Endothelial cell of umbilical vein (primary cell): ENCODE measurements at regions of chr6 and their contacts with region 1.

Region 1: DNA sequence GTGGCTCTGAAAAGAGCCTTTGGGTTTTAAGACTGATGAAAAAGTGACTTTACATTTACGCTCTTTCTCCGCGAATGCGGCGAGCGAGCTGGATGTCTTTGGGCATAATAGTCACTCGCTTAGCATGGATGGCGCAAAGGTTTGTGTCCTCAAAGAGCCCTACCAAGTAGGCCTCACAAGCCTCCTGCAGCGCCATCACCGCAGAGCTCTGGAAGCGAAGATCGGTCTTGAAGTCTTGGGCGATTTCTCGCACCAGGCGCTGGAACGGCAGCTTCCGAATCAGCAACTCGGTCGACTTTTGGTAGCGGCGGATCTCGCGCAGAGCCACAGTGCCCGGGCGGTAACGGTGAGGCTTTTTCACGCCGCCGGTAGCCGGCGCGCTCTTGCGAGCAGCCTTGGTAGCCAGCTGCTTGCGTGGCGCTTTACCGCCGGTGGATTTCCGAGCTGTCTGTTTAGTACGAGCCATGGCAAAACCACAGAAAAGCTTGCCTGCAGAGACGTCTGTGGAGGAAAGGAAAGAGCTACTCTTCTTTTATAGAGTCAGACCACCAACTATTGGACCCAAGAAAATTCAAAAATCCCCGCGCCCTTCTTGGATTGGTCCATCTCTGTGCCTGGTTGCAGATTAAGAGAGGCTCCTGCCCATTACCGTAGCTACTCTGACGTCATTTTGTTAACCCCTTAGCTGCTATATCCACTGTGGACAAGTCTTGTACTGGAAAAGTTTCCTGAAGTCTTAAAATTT is 55.5 kb upstream of the HFE start:
- DNase-seq: peak; percentile 96
- H3K4me3 ChIP-seq: peak overlapping the region; percentile 45 to 78 (median 47)
- H3K27ac ChIP-seq: peak overlapping the region; percentile 88
- H3K4me1 ChIP-seq: peaks cover 33% of the 10 kb centered on the region
- H3K27me3 ChIP-seq: no peaks in the 10 kb centered on the region
- CTCF ChIP-seq: peak in 1 of 2 donors; percentile 29
- POLR2A ChIP-seq: peak; percentile 99

Region 2: DNA sequence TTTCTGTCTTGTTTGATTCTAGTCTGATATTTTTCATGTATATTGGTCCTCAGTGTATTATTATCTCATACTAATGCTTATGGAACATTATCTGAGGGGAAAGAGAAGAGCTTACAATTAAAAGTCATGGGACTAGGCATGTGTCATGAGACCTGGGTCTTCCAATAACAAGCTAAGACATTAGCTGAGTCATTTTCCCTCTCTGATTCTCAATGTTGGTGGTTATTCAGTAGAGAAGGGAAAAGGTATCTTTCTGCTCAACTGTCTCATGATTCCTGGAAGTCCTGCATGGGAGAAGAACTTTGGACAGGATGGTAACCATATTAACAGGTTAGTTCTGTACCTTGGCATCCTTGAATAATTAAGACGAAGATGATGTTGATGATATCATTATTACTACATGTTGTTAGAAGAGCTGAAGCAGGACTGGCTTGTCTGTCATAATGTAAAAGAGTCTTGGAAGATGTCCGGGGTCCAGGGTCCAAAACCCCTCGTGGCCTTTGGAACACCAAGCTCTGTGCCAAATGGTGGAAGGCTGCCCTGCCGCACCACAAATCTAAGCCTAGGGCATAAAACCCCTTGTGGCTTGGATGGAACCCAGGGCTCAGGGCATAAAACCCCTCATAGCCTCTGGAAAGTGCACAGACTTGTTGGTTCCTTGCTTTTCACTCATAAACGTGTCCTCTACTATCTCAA is 50.1 kb before region 1 on chr6:
- CTCF ChIA-PET with region 1: no interaction called
- POLR2A ChIA-PET with region 1: no interaction called
- dilution Hi-C with region 1: no loop called
- intact Hi-C with region 1: no loop called
- DNase-seq: no peak
- H3K4me3 ChIP-seq: no peak overlapping the region
- H3K27ac ChIP-seq: no peak overlapping the region
- H3K4me1 ChIP-seq: no peaks in the 10 kb centered on the region
- H3K27me3 ChIP-seq: no peaks in the 10 kb centered on the region
- CTCF ChIP-seq: no peak
- POLR2A ChIP-seq: no peak

Region 3: GRCh38 chr6:26045065-26045927 is 13.5 kb after region 1 on chr6:
- CTCF ChIA-PET with region 1: interaction called, 53 read pairs
- POLR2A ChIA-PET with region 1: interaction called, 75 read pairs
- dilution Hi-C with region 1: no loop called
- intact Hi-C with region 1: loop called (anchors 1 kb)
- DNase-seq: peak; percentile 97
- H3K4me3 ChIP-seq: peak overlapping the region; percentile 3 to 62 (median 45)
- H3K27ac ChIP-seq: peak overlapping the region; percentile 92
- H3K4me1 ChIP-seq: peaks cover 19% of the 10 kb centered on the region
- H3K27me3 ChIP-seq: no peaks in the 10 kb centered on the region
- CTCF ChIP-seq: peak in 1 of 2 donors; percentile 23
- POLR2A ChIP-seq: peak; percentile 98

Region 4: DNA sequence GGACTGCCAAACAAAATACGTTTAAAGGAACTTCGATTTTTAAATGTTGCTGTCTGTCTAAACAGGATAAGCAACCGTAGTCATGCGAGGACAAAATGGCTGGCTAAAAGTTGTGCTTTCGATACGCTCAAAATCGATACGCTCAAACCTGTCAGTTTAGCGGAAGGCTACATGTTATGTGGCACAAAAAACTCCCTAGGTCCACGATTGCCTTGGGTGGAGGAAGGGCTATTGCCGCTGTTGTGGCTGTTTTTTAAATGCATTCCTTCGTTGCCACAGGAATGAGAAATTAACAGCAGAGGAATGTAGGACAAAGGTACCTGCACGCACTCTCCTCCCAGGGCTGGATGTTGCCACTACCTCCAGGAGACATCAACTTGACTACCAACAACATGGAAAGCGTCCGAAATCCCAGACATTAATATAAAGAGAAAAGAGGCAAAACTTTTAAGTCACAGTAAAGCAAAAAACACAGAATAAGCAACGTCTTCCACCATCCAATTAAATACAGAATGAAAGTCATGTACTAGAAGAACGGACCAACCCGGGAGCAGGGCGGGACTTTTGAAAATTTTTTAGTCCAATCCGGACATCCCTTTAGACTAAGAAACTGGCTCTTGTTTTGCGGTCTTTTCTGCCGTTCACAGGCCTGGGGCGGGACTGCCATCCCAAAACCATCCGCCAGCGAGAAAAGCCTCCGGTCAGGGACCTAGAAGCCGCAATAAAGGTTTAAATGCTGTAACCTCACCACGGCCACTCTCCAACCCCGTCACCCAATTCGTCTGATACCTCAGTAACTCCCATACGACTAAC is 23.3 kb after region 1 on chr6:
- CTCF ChIA-PET with region 1: interaction called, 9 read pairs
- POLR2A ChIA-PET with region 1: interaction called, 10 read pairs
- dilution Hi-C with region 1: no loop called
- intact Hi-C with region 1: loop called (anchors 1 kb)
- DNase-seq: peak; percentile 94
- H3K4me3 ChIP-seq: peak overlapping the region; percentile 62 to 74 (median 65)
- H3K27ac ChIP-seq: peak overlapping the region; percentile 98
- H3K4me1 ChIP-seq: peaks cover 13% of the 10 kb centered on the region
- H3K27me3 ChIP-seq: no peaks in the 10 kb centered on the region
- CTCF ChIP-seq: no peak
- POLR2A ChIP-seq: peak; percentile 98

Region 5: GRCh38 chr6:26103770-26104456 is 72.1 kb after region 1 on chr6:
- CTCF ChIA-PET with region 1: interaction called, 26 read pairs
- POLR2A ChIA-PET with region 1: interaction called, 3 read pairs
- dilution Hi-C with region 1: no loop called
- intact Hi-C with region 1: loop called (anchors 2 kb)
- DNase-seq: peak; percentile 97
- H3K4me3 ChIP-seq: peak overlapping the region; percentile 32 to 46 (median 34)
- H3K27ac ChIP-seq: peak overlapping the region; percentile 87
- H3K4me1 ChIP-seq: peaks cover 18% of the 10 kb centered on the region
- H3K27me3 ChIP-seq: peaks cover 0 to 4% of the 10 kb centered on the region in 2 experiments
- CTCF ChIP-seq: peak; percentile 31 to 57
- POLR2A ChIP-seq: peak; percentile 99

Region 6: DNA sequence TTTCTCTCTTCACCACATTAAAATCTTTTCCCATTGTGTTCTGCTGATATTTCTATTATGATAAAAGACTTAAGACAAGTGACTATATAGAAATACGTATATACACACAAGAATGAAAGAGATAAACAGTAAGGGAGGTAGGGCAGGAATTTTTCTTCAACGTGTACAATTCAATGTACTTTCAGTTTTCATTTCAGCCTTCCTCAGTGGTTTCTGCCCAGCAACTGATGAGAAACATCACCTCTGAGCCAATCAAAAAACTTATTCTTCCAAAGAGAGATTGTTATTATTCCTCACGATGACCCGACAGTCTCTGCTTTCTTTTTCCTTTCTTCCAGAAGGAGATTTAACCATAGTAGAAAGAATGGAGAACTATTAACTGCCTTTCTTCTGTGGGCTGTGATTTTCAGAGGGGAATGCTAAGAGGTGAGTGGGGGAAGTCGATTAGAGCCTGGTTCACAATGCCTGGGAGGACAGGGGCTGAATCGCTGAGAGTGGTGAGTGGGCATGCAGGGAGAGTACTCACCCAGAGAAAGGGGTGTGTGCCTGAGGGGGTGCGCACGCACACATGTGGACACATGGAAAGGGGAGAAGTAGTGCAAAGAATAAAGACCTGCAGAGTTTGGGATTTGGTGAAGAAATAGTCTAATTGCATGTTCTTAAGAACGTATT is 370.4 kb after region 1 on chr6 and contains the start of gene BTN3A1:
- CTCF ChIA-PET with region 1: no interaction called
- POLR2A ChIA-PET with region 1: no interaction called
- dilution Hi-C with region 1: no loop called
- intact Hi-C with region 1: no loop called
- DNase-seq: peak; percentile 93
- H3K4me3 ChIP-seq: peak within 1 kb of the TSS; percentile 46 to 79 (median 55)
- H3K27ac ChIP-seq: peak within 1 kb of the TSS; percentile 61
- H3K4me1 ChIP-seq: peaks cover 2% of the 10 kb centered on the region
- H3K27me3 ChIP-seq: no peaks in the 10 kb centered on the region
- CTCF ChIP-seq: no peak
- POLR2A ChIP-seq: no peak
- total RNA-seq, gene BTN3A1: 9.0 and 12.1 TPM in 2 replicates